ENCODE measurements at regions of chr13 and their contacts with region 1.

Region 1: DNA sequence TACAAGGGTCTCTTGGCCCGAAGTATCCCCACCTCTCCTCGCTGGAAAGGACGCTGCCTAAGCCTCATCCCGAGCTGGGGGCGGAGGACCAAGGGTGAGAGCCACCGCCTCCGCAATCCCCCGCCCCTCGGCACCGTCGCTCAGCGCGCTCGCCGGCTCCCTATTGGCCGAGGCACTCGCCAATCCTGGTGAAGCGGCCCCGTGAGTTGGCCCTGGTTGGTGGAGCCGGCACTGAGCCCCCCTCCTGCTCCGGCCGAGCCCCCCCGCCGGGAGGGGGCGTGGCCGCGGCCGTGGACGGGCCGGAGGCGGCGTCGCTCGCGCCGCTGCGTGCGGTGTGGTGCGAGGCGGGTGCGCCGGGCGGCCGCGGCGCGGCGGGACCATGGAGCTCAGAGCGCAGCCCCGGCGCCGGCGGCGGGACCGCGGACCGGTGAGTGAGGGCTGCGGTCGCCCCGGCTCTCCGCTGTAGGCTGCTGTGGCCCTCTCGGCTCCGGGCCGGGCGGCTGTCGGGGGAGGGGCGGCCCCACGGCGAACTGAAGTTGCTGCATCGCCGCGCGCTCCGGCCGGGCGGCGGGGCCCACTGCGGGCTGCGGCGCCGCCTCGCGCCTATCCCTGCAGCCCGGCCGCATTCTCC is at the start of gene WASF3:
- DNase-seq: peak; percentile 90 to 92
- ATAC-seq: peak; percentile 92 to 93
- H3K4me3 ChIP-seq: peak within 1 kb of the TSS; percentile 60 to 73 (median 70)
- H3K27ac ChIP-seq: peak within 1 kb of the TSS; percentile 9 to 69 (median 57)
- H3K4me1 ChIP-seq: peaks cover 0 to 12% of the 10 kb centered on the region in 2 donors
- H3K27me3 ChIP-seq: peaks cover 0 to 3% (median 0%) of the 10 kb centered on the region in 3 donors
- CTCF ChIP-seq: no peak
- POLR2A ChIP-seq: peak; percentile 55 to 60
- total RNA-seq, gene WASF3: 5.4 to 11.6 (median 7.6) TPM

Region 2: DNA sequence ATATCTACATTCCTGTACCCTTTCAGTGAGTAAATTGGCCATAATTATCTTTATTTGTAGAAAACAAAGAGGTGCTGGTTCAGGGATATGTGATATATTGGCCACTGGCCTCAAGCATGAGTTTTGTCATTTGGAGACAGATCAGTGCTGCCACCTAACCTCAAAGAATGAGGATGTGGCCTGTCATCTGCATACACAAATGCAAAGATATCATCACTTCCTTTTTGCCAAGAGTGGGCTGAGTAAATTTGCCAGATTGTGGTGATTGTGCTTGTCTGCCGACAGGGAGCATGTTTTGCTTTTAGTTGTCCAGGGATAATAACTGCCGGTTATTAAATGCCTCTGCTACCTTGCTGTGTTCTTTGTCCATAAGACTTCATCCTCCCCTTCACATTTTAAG is 44.2 kb after region 1 on chr13:
- in situ Hi-C with region 1: no loop called
- intact Hi-C with region 1: loop called (anchors 5 kb)
- DNase-seq: no peak
- ATAC-seq: no peak
- H3K4me3 ChIP-seq: no peak overlapping the region
- H3K27ac ChIP-seq: peak overlapping the region in 1 of 4 donors; percentile 26
- H3K4me1 ChIP-seq: peaks cover 14 to 26% of the 10 kb centered on the region in 2 donors
- H3K27me3 ChIP-seq: no peaks in the 10 kb centered on the region
- CTCF ChIP-seq: no peak
- POLR2A ChIP-seq: no peak

Region 3: GRCh38 chr13:26619358-26619757 is 61.9 kb after region 1 on chr13:
- in situ Hi-C with region 1: no loop called
- intact Hi-C with region 1: no loop called
- DNase-seq: no peak
- ATAC-seq: no peak
- H3K4me3 ChIP-seq: no peak overlapping the region
- H3K27ac ChIP-seq: no peak overlapping the region
- H3K4me1 ChIP-seq: no peaks in the 10 kb centered on the region
- H3K27me3 ChIP-seq: no peaks in the 10 kb centered on the region
- CTCF ChIP-seq: no peak
- POLR2A ChIP-seq: no peak